Right ventricle myocardium superior (tissue), 1 donor: ENCODE measurements at regions of chr17 and their contacts with region 1.

Region 1: DNA sequence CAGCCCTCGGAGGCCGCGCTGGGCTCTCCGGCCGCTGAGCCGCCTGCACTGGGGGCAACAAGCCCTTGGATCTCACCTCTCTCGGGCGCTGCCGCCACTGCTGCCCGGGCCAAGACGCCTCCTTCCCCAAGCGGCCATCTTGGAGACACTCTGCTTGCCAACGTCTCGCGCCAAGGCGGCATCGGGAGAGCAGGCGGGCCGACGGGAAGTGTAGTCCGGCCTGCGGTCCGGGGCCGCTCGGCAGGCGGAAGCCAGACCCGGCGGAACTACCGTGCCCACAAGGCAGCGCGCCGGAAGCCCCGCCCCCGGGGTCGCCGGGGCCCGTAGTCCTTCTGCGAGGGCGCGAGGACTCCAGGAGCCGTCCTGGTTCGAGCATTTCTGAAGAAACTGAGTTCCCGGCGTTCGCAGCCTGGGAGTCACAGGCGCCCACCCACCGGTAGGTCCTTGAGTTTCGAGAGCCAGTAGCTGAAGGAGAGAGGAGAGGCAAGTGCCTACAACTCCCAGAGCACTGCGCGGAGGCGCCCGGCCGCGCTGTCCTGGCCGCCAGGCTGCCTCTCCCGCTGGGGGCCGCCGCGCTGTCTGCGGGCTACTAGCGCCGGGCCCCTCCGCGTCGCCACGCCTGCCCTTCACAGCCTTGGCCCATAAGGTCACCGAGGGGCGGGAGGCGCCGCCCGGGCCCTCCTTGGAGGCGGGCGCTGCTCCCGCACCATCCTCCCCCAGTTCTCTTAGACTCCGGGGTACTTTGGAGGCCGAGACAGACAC is at the start of gene TMEM11:
- DNase-seq: peak; percentile 98
- ATAC-seq: peak; percentile 95
- total RNA-seq, gene TMEM11: 31.9 TPM

Region 2: GRCh38 chr17:20797292-20797691 is 416.9 kb before region 1 on chr17:
- intact Hi-C with region 1: no loop called
- DNase-seq: no peak
- ATAC-seq: no peak

Region 3: GRCh38 chr17:21263351-21263750 is 49.2 kb after region 1 on chr17:
- intact Hi-C with region 1: loop called (anchors 10 kb)
- DNase-seq: no peak
- ATAC-seq: no peak

Region 4: GRCh38 chr17:21353326-21354010 is 139.3 kb after region 1 on chr17:
- intact Hi-C with region 1: no loop called
- DNase-seq: peak; percentile 39
- ATAC-seq: no peak